Esophagus muscularis mucosa (tissue), 4 donors: ENCODE measurements at regions of chr15 and their contacts with region 1.

Region 1: DNA sequence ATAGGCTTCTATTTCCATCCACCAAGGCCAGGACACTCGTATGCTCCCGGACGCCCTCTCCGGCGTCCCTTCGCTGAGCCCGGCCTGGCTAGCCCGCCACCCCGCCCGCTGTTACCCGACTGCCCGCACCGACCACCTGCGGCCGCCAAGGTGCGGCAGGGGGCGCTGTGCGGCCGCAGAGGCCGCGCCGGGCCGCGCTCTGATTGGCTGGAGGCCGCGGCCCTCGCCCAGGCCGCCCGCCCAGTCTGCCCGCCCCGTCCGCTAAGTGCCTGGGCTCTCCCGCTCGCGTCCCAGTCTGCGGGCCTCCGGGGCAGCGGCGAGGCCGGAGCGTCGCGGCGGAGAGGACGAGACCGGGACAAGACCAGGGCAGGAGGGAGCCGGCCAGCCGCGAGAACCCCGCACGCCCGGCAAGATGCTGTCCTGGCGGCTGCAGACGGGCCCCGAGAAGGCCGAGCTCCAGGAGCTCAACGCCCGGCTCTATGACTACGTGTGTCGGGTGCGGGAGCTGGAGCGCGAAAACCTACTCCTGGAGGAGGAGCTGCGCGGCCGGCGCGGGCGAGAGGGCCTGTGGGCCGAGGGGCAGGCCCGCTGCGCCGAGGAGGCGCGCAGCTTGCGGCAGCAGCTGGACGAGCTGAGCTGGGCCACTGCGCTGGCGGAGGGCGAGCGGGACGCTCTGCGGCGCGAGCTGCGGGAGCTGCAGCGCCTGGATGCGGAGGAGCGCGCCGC is at the start of gene SYNM:
- DNase-seq: no peak
- H3K4me3 ChIP-seq: peak within 1 kb of the TSS; percentile 77 to 91 (median 88)
- H3K27ac ChIP-seq: peak within 1 kb of the TSS; percentile 97 to 98 (median 98)
- H3K4me1 ChIP-seq: peaks cover 10 to 58% (median 48%) of the 10 kb centered on the region in 4 donors
- H3K27me3 ChIP-seq: peaks cover 0 to 5% (median 0%) of the 10 kb centered on the region in 4 donors
- CTCF ChIP-seq: peak; percentile 90 to 97 (median 90)
- EP300 ChIP-seq: no peak
- POLR2A ChIP-seq: peak; percentile 91
- total RNA-seq, gene SYNM: 1,866 to 2,563 (median 2,454) TPM

Region 2: DNA sequence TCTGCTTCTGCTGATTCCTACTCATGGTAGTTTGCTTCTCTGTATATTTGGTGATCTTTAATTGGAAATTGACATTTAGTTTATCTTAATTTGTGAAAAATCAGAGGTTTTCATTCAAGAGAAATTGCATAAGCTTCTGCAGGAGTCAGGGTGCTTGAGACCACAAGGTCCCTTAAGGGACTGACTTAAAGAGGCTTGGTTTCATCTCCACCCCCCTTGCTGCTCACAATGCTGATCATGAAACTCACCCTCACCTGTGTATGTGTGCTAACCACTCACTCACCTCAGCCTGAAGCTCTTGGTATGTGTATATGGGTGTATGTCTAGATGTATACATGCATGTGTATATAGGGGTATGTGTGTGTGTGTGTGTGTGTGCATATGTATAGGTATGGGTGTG is 108.8 kb before region 1 on chr15:
- intact Hi-C with region 1: no loop called
- DNase-seq: no peak
- H3K4me3 ChIP-seq: no peak overlapping the region
- H3K27ac ChIP-seq: no peak overlapping the region
- H3K4me1 ChIP-seq: no peaks in the 10 kb centered on the region
- H3K27me3 ChIP-seq: no peaks in the 10 kb centered on the region
- CTCF ChIP-seq: no peak
- EP300 ChIP-seq: no peak
- POLR2A ChIP-seq: no peak

Region 3: GRCh38 chr15:99213187-99213811 is 108.3 kb after region 1 on chr15:
- intact Hi-C with region 1: loop called (anchors 2 kb)
- DNase-seq: no peak
- H3K4me3 ChIP-seq: no peak overlapping the region
- H3K27ac ChIP-seq: peak overlapping the region; percentile 80 to 92 (median 84)
- H3K4me1 ChIP-seq: peaks cover 5 to 58% (median 53%) of the 10 kb centered on the region in 4 donors
- H3K27me3 ChIP-seq: no peaks in the 10 kb centered on the region
- CTCF ChIP-seq: peak; percentile 94 to 99 (median 94)
- EP300 ChIP-seq: no peak
- POLR2A ChIP-seq: no peak

Region 4: GRCh38 chr15:99275525-99276128 is 170.7 kb after region 1 on chr15:
- intact Hi-C with region 1: no loop called
- DNase-seq: no peak
- H3K4me3 ChIP-seq: no peak overlapping the region
- H3K27ac ChIP-seq: no peak overlapping the region
- H3K4me1 ChIP-seq: no peaks in the 10 kb centered on the region
- H3K27me3 ChIP-seq: no peaks in the 10 kb centered on the region
- CTCF ChIP-seq: no peak
- EP300 ChIP-seq: no peak
- POLR2A ChIP-seq: no peak